ENCODE measurements at regions of chr11 and their contacts with region 1.

Region 1: DNA sequence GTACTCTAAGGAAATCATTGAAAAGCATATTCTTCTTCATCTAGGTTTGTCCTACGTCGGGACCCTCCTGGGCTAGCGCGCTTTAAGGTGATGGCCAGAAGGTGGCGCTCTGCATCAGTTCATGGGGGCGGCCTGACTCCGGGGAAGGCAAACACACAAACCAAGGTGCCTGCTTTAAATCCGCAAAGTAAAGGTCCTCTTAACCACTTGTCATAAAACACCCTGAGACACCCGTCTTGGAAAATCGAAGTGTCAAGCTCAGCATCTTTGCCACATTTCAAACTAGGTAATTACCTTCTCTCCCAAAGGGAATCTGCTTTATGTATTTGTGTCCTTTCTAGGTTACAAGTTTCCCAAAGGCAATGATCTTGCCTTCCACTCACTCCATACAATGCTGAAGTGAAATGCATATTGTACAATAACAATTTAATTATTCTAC is 33.9 kb downstream of the LMO2 start:
- DNase-seq: peak; percentile 70 to 85 (median 78)
- ATAC-seq: peak; percentile 77 to 91 (median 89)
- H3K4me3 ChIP-seq: no peak overlapping the region
- H3K27ac ChIP-seq: peak overlapping the region in 1 of 12 donors; percentile 15
- H3K4me1 ChIP-seq: peaks cover 0 to 8% (median 0%) of the 10 kb centered on the region in 12 donors
- H3K27me3 ChIP-seq: peaks cover 0 to 6% (median 0%) of the 10 kb centered on the region in 9 donors
- CTCF ChIP-seq: peak; percentile 87 to 98 (median 94)
- POLR2A ChIP-seq: no peak

Region 2: DNA sequence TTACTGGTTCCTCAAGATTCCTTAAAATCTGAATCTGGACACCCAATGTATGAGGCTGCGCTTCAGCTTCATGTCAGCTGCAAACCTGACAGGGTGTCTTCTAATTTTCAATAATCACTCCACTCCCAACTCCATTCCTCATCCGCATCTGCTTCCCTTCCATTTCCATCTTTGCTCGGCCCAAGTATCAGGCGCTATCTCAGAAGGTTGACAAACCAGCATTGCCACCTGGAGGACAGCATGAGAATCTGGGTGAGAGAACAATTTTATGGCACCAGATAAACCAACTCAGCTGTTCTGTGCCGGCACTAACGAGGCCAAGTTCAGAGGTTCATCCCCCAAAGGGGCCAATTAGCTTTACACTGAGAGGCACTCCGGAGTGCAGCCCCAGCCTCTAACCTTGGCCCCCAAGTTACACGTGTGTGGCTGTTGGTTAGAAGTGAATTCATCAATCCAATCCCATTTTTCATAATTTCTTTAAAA is 113.1 kb after region 1 on chr11:
- intact Hi-C with region 1: loop called (anchors 1 to 5 kb)
- DNase-seq: peak in 4 of 5 donors; percentile 42 to 53 (median 48)
- ATAC-seq: peak; percentile 37 to 91 (median 87)
- H3K4me3 ChIP-seq: no peak overlapping the region
- H3K27ac ChIP-seq: no peak overlapping the region
- H3K4me1 ChIP-seq: peaks cover 0 to 5% (median 0%) of the 10 kb centered on the region in 12 donors
- H3K27me3 ChIP-seq: no peaks in the 10 kb centered on the region
- CTCF ChIP-seq: peak; percentile 40 to 78 (median 68)
- POLR2A ChIP-seq: no peak

Region 3: DNA sequence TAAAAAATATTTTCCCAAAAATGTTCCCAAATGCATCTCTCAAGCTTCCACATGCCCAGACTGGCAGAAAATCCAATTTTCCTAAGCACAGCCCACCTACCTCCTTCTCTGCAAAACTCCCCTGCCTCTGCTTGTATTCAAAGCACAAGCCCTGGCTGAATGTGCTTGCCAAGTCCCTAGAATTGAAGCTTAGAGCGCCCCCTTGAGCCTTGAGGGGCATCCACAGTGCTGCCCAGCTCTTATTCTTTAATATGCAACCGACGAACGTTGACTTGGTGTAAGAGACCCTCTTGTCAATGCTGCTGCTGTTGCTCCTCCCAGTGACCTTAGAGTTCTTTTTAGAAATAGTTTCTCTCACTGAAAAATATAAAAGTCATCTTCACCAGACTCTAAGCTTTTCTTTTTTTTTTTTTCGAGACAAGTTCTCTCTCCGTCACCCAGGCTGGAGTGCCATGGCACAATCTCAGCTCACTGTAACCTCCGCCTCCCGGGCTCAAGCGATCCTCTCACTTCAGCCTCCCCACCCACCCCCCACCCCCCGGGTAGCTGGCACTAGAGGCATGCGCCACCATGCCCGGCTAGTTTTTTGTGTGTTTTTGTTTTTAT is 130.1 kb after region 1 on chr11:
- intact Hi-C with region 1: loop called in 4 of 10 experiments (anchors 1 to 5 kb)
- DNase-seq: peak; percentile 60 to 77 (median 71)
- ATAC-seq: peak in 3 of 4 donors; percentile 84 to 88 (median 86)
- H3K4me3 ChIP-seq: no peak overlapping the region
- H3K27ac ChIP-seq: no peak overlapping the region
- H3K4me1 ChIP-seq: no peaks in the 10 kb centered on the region
- H3K27me3 ChIP-seq: no peaks in the 10 kb centered on the region
- CTCF ChIP-seq: peak; percentile 67 to 92 (median 82)
- POLR2A ChIP-seq: no peak

Region 4: DNA sequence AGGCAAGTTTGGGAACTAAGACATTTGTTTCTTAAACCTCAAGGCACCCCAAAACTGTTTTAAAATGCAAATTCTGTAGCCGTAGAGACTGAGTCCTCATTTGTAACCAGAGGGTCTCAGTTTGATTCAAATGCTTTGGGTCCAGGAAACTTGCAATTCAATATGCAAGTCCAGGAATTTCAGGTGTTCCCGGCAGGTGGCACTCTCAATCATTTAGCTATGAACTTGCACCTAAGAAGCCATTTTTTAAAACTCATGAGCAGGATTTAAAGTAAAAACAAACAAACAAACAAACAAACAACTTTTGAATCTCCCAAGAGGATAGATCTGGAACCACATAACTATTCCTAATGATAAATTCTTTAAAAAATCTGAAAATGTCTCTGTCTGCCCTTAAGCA is 508.6 kb after region 1 on chr11:
- intact Hi-C with region 1: loop called in 2 of 10 experiments (anchors 5 to 10 kb)
- DNase-seq: no peak
- ATAC-seq: no peak
- H3K4me3 ChIP-seq: no peak overlapping the region
- H3K27ac ChIP-seq: no peak overlapping the region
- H3K4me1 ChIP-seq: peaks cover 0 to 6% (median 0%) of the 10 kb centered on the region in 12 donors
- H3K27me3 ChIP-seq: peaks cover 0 to 6% (median 0%) of the 10 kb centered on the region in 9 donors
- CTCF ChIP-seq: peak in 6 of 12 donors; percentile 17 to 42 (median 34)
- POLR2A ChIP-seq: no peak